Activated naive CD4-positive, alpha-beta T cell treated with anti-CD3 and anti-CD28 coated beads for 36 hours (primary cell): ENCODE measurements at regions of chr12 and their contacts with region 1.

Region 1: GRCh38 chr12:122646517-122647217 is 56.5 kb downstream of the HCAR2 start:
- DNase-seq: peak; percentile 81
- H3K4me3 Mint-ChIP-seq: peak overlapping the region; percentile 44
- H3K27ac Mint-ChIP-seq: peak overlapping the region; percentile 63
- H3K4me1 Mint-ChIP-seq: peaks cover 14% of the 10 kb centered on the region
- H3K27me3 Mint-ChIP-seq: no peaks in the 10 kb centered on the region

Region 2: DNA sequence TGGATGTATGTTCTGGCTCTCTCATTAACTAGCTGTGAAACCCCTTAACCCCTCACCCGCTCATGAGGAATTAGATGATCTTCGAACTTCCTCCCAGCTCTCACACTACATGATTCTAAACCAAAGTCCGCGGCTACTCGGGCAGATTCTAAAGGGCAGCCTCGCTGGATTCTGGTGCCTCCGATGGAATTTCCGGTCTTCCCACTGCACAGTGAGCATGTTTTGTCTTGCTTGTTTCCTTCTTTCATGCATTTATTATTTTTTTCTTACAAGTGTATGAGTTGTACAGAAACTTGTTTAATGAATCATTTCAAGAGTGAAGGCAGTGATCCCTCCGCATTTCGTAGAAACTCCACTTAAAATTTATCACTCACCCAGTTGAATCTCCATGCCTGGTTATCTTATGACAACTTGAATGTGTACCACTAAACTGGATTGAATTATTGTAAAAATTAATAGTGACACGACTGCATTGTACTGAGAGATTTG is 74.4 kb after region 1 on chr12:
- CTCF ChIA-PET with region 1: no interaction called
- intact Hi-C with region 1: loop called (anchors 1 kb)
- DNase-seq: peak; percentile 26
- H3K4me3 Mint-ChIP-seq: peak overlapping the region; percentile 30
- H3K27ac Mint-ChIP-seq: peak overlapping the region; percentile 88
- H3K4me1 Mint-ChIP-seq: peaks cover 49% of the 10 kb centered on the region
- H3K27me3 Mint-ChIP-seq: no peaks in the 10 kb centered on the region